Panc1 (cell line): ENCODE measurements at regions of chr2 and their contacts with region 1.

Region 1: GRCh38 chr2:40439473-40439872 is 12.4 kb downstream of the SLC8A1 start:
- DNase-seq: no peak
- ATAC-seq: no peak
- H3K4me3 ChIP-seq: no peak overlapping the region
- H3K27ac ChIP-seq: no peak overlapping the region
- H3K4me1 ChIP-seq: peaks cover 12% of the 10 kb centered on the region
- H3K27me3 ChIP-seq: no peaks in the 10 kb centered on the region
- CTCF ChIP-seq: no peak

Region 2: DNA sequence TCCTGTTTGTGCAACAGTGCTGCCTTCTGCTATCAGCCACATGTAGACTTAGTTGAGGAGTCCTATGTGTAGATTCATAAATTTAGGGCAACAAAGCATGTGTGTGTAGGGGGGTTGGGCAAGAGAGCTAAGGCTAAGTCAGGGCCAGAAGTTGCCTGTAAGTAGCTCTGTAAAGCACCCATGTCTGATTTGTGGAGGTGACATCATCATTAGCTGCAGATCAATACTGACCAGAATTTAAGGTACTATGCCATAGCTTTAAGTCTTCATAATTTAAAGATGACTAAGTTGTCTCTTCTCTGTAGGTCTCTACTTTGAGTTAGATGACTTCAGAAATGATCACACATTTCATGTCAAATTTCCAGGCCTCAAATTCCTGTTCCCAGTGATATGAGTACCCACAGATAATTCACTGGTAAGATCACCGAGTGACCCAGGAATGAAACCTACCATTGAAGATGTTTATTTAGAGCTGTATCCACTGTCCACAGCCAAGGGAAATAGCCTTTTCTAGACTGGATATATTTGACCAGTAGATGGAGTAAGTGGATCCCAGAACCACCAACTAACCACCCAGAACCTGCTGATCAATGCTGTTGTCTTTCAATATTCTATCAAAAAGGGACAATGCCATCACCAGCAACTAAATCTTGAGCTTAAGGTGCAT is 226.5 kb before region 1 on chr2:
- CTCF ChIA-PET with region 1: no interaction called
- POLR2A ChIA-PET with region 1: no interaction called
- in situ Hi-C with region 1: no loop called
- intact Hi-C with region 1: no loop called
- DNase-seq: no peak
- ATAC-seq: no peak
- H3K4me3 ChIP-seq: no peak overlapping the region
- H3K27ac ChIP-seq: no peak overlapping the region
- H3K4me1 ChIP-seq: no peaks in the 10 kb centered on the region
- H3K27me3 ChIP-seq: no peaks in the 10 kb centered on the region
- CTCF ChIP-seq: peak; percentile 41

Region 3: GRCh38 chr2:40357667-40358066 is 81.8 kb before region 1 on chr2:
- CTCF ChIA-PET with region 1: no interaction called
- POLR2A ChIA-PET with region 1: interaction called, 11 read pairs
- in situ Hi-C with region 1: no loop called
- intact Hi-C with region 1: no loop called
- DNase-seq: no peak
- ATAC-seq: no peak
- H3K4me3 ChIP-seq: no peak overlapping the region
- H3K27ac ChIP-seq: no peak overlapping the region
- H3K4me1 ChIP-seq: no peaks in the 10 kb centered on the region
- H3K27me3 ChIP-seq: no peaks in the 10 kb centered on the region; the same call in 1 of the 2 replicates
- CTCF ChIP-seq: no peak